Right ventricle myocardium superior (tissue), 1 donor: ENCODE measurements at regions of chr14 and their contacts with region 1.

Region 1: GRCh38 chr14:44912041-44912869 is 49.5 kb downstream of the KLHL28 start:
- DNase-seq: peak; percentile 43
- ATAC-seq: peak; percentile 69

Region 2: GRCh38 chr14:44873536-44873935 is 38.7 kb before region 1 on chr14:
- intact Hi-C with region 1: no loop called
- DNase-seq: no peak
- ATAC-seq: no peak

Region 3: GRCh38 chr14:45038865-45039264 is 126.6 kb after region 1 on chr14:
- intact Hi-C with region 1: no loop called
- DNase-seq: no peak
- ATAC-seq: no peak

Region 4: GRCh38 chr14:45267071-45267470 is 354.8 kb after region 1 on chr14:
- intact Hi-C with region 1: loop called (anchors 10 kb)
- DNase-seq: no peak
- ATAC-seq: peak; percentile 90